Caco-2 (cell line): ENCODE measurements at regions of chr17 and their contacts with region 1.

Region 1: GRCh38 chr17:17812211-17813057 is 24.4 kb downstream of the SREBF1 start:
- DNase-seq: peak; percentile 66 to 85
- H3K4me3 ChIP-seq: no peak overlapping the region
- H3K4me3 Mint-ChIP-seq: no peak overlapping the region
- H3K27ac Mint-ChIP-seq: peak overlapping the region; percentile 16
- H3K4me1 ChIP-seq: peaks cover 12% of the 10 kb centered on the region
- H3K4me1 Mint-ChIP-seq: no peaks in the 10 kb centered on the region
- H3K27me3 ChIP-seq: no peaks in the 10 kb centered on the region
- H3K27me3 Mint-ChIP-seq: no peaks in the 10 kb centered on the region
- CTCF ChIP-seq: peak; percentile 96 to 99

Region 2: DNA sequence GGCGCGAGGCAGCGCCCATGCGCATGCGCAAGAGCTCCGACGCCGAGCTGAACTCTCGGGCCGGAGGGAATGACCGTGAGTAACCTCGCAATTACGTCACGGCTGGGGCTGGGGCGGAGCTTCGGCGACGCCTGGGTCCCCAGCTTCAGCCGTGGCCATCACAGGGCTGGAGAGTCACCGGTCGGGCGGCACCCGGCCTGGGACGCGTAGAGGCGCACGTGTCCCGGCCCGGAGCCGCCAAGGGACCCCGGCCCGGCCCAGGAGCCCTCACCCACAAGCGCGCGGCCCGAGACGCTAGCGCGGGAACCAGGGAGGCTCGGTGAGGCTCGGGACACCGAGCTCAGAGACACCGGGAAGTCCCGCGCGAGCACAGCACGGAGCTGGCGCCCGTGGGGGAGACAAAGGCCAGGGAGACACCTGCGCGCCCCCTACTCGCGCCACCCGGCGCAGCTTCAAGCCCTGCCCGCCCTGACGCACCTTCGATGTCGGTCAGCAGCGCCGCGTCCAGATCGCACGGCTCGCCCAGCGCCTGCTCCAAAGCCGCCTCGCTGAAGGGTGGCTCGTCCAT is 23.9 kb after region 1 on chr17:
- CTCF ChIA-PET with region 1: interaction called, 4 read pairs
- POLR2A ChIA-PET with region 1: interaction called, 10 read pairs
- intact Hi-C with region 1: loop called (anchors 1 kb)
- DNase-seq: peak; percentile 98 to 99
- H3K4me3 ChIP-seq: peak overlapping the region; percentile 98
- H3K4me3 Mint-ChIP-seq: peak overlapping the region; percentile 82
- H3K27ac Mint-ChIP-seq: peak overlapping the region; percentile 98
- H3K4me1 ChIP-seq: peaks cover 46% of the 10 kb centered on the region
- H3K4me1 Mint-ChIP-seq: peaks cover 38% of the 10 kb centered on the region
- H3K27me3 ChIP-seq: no peaks in the 10 kb centered on the region
- H3K27me3 Mint-ChIP-seq: no peaks in the 10 kb centered on the region
- CTCF ChIP-seq: no peak

Region 3: DNA sequence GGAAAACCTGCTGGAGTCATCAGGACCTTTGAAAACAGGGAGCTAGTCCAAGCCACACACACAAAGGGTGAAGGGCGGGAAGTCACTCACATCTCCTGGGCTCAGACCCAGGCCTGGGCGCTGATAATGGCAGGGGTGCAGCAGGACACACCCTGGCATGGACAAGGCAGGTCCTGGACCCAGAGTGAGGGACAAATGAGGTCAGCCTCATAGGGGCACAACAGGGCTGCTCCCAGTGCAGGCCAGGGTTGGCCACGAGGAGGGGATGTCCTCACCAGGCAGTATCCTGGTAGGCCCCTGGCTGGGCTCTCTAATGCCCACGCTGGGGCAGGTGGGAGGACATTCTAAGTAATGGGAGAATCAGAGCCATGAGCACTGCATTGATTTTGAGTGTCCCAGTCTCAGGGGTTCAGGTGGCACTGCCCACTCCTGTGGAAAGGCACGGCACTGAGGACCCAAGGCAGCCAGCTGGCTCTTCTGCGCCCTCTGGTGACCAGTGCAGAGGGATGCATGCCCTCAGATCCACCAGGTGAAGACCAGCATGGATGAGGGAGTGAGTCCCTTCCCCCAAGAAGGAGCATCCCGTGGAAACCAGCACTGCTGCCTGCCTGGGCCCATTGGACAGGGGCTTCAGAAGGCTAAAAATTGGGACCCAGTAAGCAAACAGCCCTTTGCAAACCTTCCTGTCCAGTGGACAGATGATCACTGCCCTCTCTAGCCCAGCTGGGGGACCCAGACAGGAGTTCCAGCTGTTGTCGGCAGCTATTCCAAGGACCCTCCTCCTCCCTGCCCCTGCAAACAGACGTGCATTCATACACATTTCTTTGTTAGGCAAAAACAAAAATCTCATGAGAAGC is 47.7 kb after region 1 on chr17:
- CTCF ChIA-PET with region 1: interaction called, 22 read pairs
- POLR2A ChIA-PET with region 1: no interaction called
- intact Hi-C with region 1: loop called (anchors 1 kb)
- DNase-seq: peak; percentile 70 to 78
- H3K4me3 ChIP-seq: no peak overlapping the region
- H3K4me3 Mint-ChIP-seq: no peak overlapping the region
- H3K27ac Mint-ChIP-seq: no peak overlapping the region
- H3K4me1 ChIP-seq: peaks cover 3% of the 10 kb centered on the region; the same call in 1 of the 2 replicates
- H3K4me1 Mint-ChIP-seq: peaks cover 6% of the 10 kb centered on the region
- H3K27me3 ChIP-seq: no peaks in the 10 kb centered on the region
- H3K27me3 Mint-ChIP-seq: no peaks in the 10 kb centered on the region
- CTCF ChIP-seq: peak; percentile 98

Region 4: GRCh38 chr17:17877529-17878358 is 65.3 kb after region 1 on chr17:
- CTCF ChIA-PET with region 1: no interaction called
- POLR2A ChIA-PET with region 1: no interaction called
- intact Hi-C with region 1: no loop called
- DNase-seq: no peak
- H3K4me3 ChIP-seq: no peak overlapping the region
- H3K4me3 Mint-ChIP-seq: no peak overlapping the region
- H3K27ac Mint-ChIP-seq: no peak overlapping the region
- H3K4me1 ChIP-seq: no peaks in the 10 kb centered on the region
- H3K4me1 Mint-ChIP-seq: no peaks in the 10 kb centered on the region
- H3K27me3 ChIP-seq: no peaks in the 10 kb centered on the region
- H3K27me3 Mint-ChIP-seq: no peaks in the 10 kb centered on the region
- CTCF ChIP-seq: no peak

Region 5: GRCh38 chr17:18038861-18039534 is 226.6 kb after region 1 on chr17 and contains the starts of genes ATPAF2 and GID4:
- CTCF ChIA-PET with region 1: no interaction called
- POLR2A ChIA-PET with region 1: no interaction called
- intact Hi-C with region 1: loop called (anchors 10 kb)
- DNase-seq: peak; percentile 99 to 100
- H3K4me3 ChIP-seq: peak within 1 kb of the TSS; percentile 85
- H3K4me3 Mint-ChIP-seq: peak within 1 kb of the TSS; percentile 83
- H3K27ac Mint-ChIP-seq: peak within 1 kb of the TSS; percentile 82
- H3K4me1 ChIP-seq: peaks cover 19% of the 10 kb centered on the region
- H3K4me1 Mint-ChIP-seq: peaks cover 26% of the 10 kb centered on the region
- H3K27me3 ChIP-seq: no peaks in the 10 kb centered on the region
- H3K27me3 Mint-ChIP-seq: no peaks in the 10 kb centered on the region
- CTCF ChIP-seq: peak in 1 of 2 experiments; percentile 29
- total RNA-seq, gene ATPAF2: 37.9 and 40.3 TPM in 2 replicates
- total RNA-seq, gene GID4: 12.7 and 14.0 TPM in 2 replicates